Mammary epithelial cell (primary cell): ENCODE measurements at regions of chr3 and their contacts with region 1.

Region 1: GRCh38 chr3:64187065-64187959 is 38.0 kb downstream of the PRICKLE2 start:
- DNase-seq: peak; percentile 92
- H3K4me3 ChIP-seq: no peak overlapping the region
- H3K27ac ChIP-seq: peak overlapping the region; percentile 63
- H3K4me1 ChIP-seq: peaks cover 77% of the 10 kb centered on the region
- H3K27me3 ChIP-seq: no peaks in the 10 kb centered on the region
- CTCF ChIP-seq: peak in 1 of 2 donors; percentile 27

Region 2: GRCh38 chr3:64163755-64164148 is 23.6 kb before region 1 on chr3:
- CTCF ChIA-PET with region 1: no interaction called
- dilution Hi-C with region 1: no loop called
- in situ Hi-C with region 1: no loop called
- intact Hi-C with region 1: loop called (anchors 2 kb)
- DNase-seq: peak; percentile 92
- H3K4me3 ChIP-seq: peak overlapping the region; percentile 5 to 21 (median 9)
- H3K27ac ChIP-seq: peak overlapping the region; percentile 94
- H3K4me1 ChIP-seq: peaks cover 63% of the 10 kb centered on the region
- H3K27me3 ChIP-seq: no peaks in the 10 kb centered on the region
- CTCF ChIP-seq: no peak

Region 3: DNA sequence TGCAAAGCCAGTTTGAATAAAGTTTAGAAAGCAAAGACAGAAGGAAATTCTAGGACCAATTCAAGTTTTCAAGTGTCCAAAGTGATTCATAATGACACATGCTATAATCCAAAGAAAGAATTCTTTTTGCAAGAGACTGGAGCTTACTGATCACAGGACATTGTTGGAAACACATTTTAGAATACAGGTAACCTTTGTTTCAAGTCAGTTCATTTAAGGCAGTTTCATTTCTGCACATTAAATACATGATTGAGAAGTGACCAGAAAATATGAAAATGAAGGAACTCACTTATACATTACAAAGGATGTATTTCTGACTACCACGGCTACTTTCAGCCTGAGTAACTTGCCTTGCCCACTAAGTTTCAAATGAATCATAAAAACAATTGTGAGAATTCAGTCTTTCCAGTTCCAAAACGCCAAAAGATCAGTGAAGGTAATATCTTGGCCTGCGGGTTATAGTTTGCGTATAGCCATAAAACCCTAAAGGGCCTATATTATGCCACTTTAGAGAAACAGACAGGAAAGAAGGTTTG is 10.8 kb before region 1 on chr3:
- CTCF ChIA-PET with region 1: no interaction called
- dilution Hi-C with region 1: no loop called
- in situ Hi-C with region 1: no loop called
- intact Hi-C with region 1: loop called (anchors 1 kb)
- DNase-seq: peak; percentile 87
- H3K4me3 ChIP-seq: peak overlapping the region in 1 of 3 experiments; percentile 1
- H3K27ac ChIP-seq: peak overlapping the region; percentile 79
- H3K4me1 ChIP-seq: peaks cover 34% of the 10 kb centered on the region
- H3K27me3 ChIP-seq: no peaks in the 10 kb centered on the region
- CTCF ChIP-seq: no peak

Region 4: GRCh38 chr3:64214381-64215018 is 27.2 kb after region 1 on chr3:
- CTCF ChIA-PET with region 1: no interaction called
- dilution Hi-C with region 1: no loop called
- in situ Hi-C with region 1: no loop called
- intact Hi-C with region 1: loop called (anchors 1 kb)
- DNase-seq: peak; percentile 65
- H3K4me3 ChIP-seq: peak overlapping the region; percentile 28 to 46 (median 44)
- H3K27ac ChIP-seq: peak overlapping the region; percentile 83
- H3K4me1 ChIP-seq: peaks cover 55% of the 10 kb centered on the region
- H3K27me3 ChIP-seq: no peaks in the 10 kb centered on the region
- CTCF ChIP-seq: no peak

Region 5: DNA sequence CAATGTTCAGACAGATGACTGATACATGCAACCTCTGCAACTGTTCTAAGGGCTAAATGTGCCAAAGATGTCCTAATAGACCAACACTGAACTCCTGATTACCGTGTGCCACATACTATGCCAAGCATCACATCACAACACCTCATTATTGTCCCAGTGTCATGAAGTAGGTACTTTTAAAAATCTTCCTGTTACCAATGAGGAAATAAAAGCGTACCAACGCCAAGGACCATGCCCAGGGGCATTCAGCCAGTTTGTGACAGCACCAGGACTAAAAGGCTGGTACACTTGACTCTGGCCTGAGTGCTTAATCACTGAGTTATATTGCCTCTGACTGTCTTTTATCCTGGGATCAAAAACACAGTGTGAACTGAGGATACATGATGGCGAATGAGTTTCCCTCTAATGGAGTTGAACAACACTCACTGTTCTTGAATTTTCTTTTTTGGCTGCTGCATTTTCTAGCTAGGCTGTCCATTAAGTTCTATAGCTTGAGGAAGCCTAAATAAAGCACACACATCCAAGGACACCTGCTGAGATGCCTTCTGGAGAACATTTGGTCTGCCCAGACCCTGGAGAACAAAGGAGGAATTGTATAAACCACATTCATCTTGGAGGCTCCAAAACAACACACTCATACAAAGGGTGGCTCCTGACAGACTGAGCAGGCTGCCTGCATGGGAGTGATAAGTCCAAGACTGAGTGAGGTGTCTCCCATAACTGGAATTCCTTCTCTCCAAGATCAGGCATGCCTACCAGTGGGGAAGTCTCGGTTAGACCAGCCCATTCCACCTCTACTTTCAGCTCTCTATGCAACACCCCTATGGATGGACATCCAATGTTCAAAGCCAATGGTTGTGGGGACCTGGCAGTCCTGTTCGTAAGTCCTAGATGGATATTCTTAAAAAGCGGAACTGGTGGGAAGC is 164.7 kb after region 1 on chr3:
- CTCF ChIA-PET with region 1: no interaction called
- dilution Hi-C with region 1: no loop called
- in situ Hi-C with region 1: no loop called
- intact Hi-C with region 1: loop called (anchors 2 kb)
- DNase-seq: peak; percentile 97
- H3K4me3 ChIP-seq: peak overlapping the region in 2 of 3 experiments; percentile 18 to 22
- H3K27ac ChIP-seq: peak overlapping the region; percentile 96
- H3K4me1 ChIP-seq: peaks cover 48% of the 10 kb centered on the region
- H3K27me3 ChIP-seq: no peaks in the 10 kb centered on the region
- CTCF ChIP-seq: no peak